ENCODE measurements at regions of chr10 and their contacts with region 1.

Region 1: GRCh38 chr10:28532383-28533175 is at the start of gene WAC:
- DNase-seq: peak; percentile 94 to 99 (median 97)
- ATAC-seq: peak; percentile 79
- H3K4me3 ChIP-seq: peak within 1 kb of the TSS; percentile 74 to 99
- H3K4me3 Mint-ChIP-seq: peak within 1 kb of the TSS; percentile 99
- H3K27ac ChIP-seq: peak within 1 kb of the TSS; percentile 95 to 99
- H3K27ac Mint-ChIP-seq: peak within 1 kb of the TSS; percentile 100
- H3K4me1 ChIP-seq: peaks cover 47% of the 10 kb centered on the region
- H3K4me1 Mint-ChIP-seq: peaks cover 69% of the 10 kb centered on the region
- H3K27me3 ChIP-seq: no peaks in the 10 kb centered on the region
- H3K27me3 Mint-ChIP-seq: no peaks in the 10 kb centered on the region
- CTCF ChIP-seq: no peak
- total RNA-seq, gene WAC: 195 to 200 TPM

Region 2: GRCh38 chr10:27099916-27100812 is 1432.4 kb before region 1 on chr10 and contains the start of gene ANKRD26:
- CTCF ChIA-PET with region 1: no interaction called
- POLR2A ChIA-PET with region 1: no interaction called
- intact Hi-C with region 1: loop called in 1 of 2 experiments (anchors 2 kb)
- DNase-seq: peak; percentile 88 to 99 (median 97)
- ATAC-seq: peak; percentile 53
- H3K4me3 ChIP-seq: peak within 1 kb of the TSS; percentile 84
- H3K4me3 Mint-ChIP-seq: peak within 1 kb of the TSS; percentile 93
- H3K27ac ChIP-seq: peak within 1 kb of the TSS; percentile 70 to 94
- H3K27ac Mint-ChIP-seq: peak within 1 kb of the TSS; percentile 95
- H3K4me1 ChIP-seq: peaks cover 35% of the 10 kb centered on the region
- H3K4me1 Mint-ChIP-seq: peaks cover 51% of the 10 kb centered on the region
- H3K27me3 ChIP-seq: no peaks in the 10 kb centered on the region
- H3K27me3 Mint-ChIP-seq: no peaks in the 10 kb centered on the region
- CTCF ChIP-seq: no peak
- total RNA-seq, gene ANKRD26: 4.0 to 4.7 TPM

Region 3: GRCh38 chr10:27742195-27743011 is 790.2 kb before region 1 on chr10:
- CTCF ChIA-PET with region 1: no interaction called
- POLR2A ChIA-PET with region 1: no interaction called
- intact Hi-C with region 1: loop called (anchors 2 to 10 kb)
- DNase-seq: peak; percentile 55 to 85 (median 78)
- ATAC-seq: peak; percentile 82
- H3K4me3 ChIP-seq: peak overlapping the region; percentile 42 to 80
- H3K4me3 Mint-ChIP-seq: peak overlapping the region; percentile 87
- H3K27ac ChIP-seq: no peak overlapping the region
- H3K27ac Mint-ChIP-seq: no peak overlapping the region
- H3K4me1 ChIP-seq: peaks cover 57% of the 10 kb centered on the region
- H3K4me1 Mint-ChIP-seq: peaks cover 43% of the 10 kb centered on the region
- H3K27me3 ChIP-seq: peaks cover 53 to 65% of the 10 kb centered on the region in 2 experiments
- H3K27me3 Mint-ChIP-seq: peaks cover 57% of the 10 kb centered on the region
- CTCF ChIP-seq: peak; percentile 78

Region 4: GRCh38 chr10:28432210-28432676 is 100.3 kb before region 1 on chr10:
- CTCF ChIA-PET with region 1: no interaction called
- POLR2A ChIA-PET with region 1: no interaction called
- intact Hi-C with region 1: loop called (anchors 2 to 5 kb)
- DNase-seq: peak in 7 of 9 experiments; percentile 1 to 64 (median 18)
- ATAC-seq: peak; percentile 51
- H3K4me3 ChIP-seq: peak overlapping the region; percentile 17 to 46
- H3K4me3 Mint-ChIP-seq: peak overlapping the region; percentile 68
- H3K27ac ChIP-seq: no peak overlapping the region
- H3K27ac Mint-ChIP-seq: no peak overlapping the region
- H3K4me1 ChIP-seq: no peaks in the 10 kb centered on the region
- H3K4me1 Mint-ChIP-seq: peaks cover 8% of the 10 kb centered on the region
- H3K27me3 ChIP-seq: peaks cover 0 to 1% of the 10 kb centered on the region in 2 experiments
- H3K27me3 Mint-ChIP-seq: peaks cover 11% of the 10 kb centered on the region
- CTCF ChIP-seq: peak; percentile 86

Region 5: DNA sequence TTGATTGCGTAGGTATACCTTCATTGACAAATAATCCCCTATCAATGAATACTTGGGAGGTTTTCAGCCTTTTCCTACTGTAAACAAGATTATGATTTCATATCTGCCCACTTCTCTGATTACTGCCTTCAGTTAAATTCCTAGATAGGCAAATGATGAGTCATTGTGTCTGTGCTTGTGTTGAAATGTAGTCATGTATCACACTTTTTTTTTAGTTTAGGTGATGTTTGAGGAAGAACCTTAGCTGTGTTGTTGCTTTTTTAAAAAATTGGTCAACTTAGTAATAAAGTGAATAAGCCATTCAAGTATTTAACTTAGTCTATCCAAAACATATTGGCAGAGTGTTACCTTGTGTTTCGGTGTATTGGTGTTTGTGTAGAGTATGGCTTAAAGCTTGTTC is 60.4 kb after region 1 on chr10:
- CTCF ChIA-PET with region 1: no interaction called
- POLR2A ChIA-PET with region 1: no interaction called
- intact Hi-C with region 1: loop called (anchors 5 kb)
- DNase-seq: no peak
- ATAC-seq: no peak
- H3K4me3 ChIP-seq: no peak overlapping the region
- H3K4me3 Mint-ChIP-seq: no peak overlapping the region
- H3K27ac ChIP-seq: no peak overlapping the region
- H3K27ac Mint-ChIP-seq: peak overlapping the region; percentile 6
- H3K4me1 ChIP-seq: peaks cover 23% of the 10 kb centered on the region
- H3K4me1 Mint-ChIP-seq: peaks cover 58% of the 10 kb centered on the region
- H3K27me3 ChIP-seq: no peaks in the 10 kb centered on the region
- H3K27me3 Mint-ChIP-seq: no peaks in the 10 kb centered on the region
- CTCF ChIP-seq: no peak

Region 6: DNA sequence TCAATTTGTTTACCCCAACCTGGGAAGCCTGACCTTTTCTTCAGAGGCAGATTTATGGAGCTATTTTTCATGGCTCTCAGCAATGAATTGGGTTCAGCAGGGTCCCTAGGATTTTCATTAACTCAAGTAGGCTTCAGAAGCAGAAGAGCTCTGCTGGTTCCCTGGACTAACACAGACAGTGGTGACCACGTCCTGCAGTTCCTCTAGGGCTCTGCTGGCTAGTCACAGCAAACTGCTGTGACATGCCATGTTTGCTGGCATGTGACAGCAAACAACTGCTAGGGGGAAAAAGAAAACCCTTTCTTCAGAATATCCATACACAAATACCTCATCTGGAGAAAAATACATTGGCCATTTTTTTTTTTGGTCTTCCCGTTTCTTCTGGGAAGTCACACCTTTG is 158.0 kb after region 1 on chr10:
- CTCF ChIA-PET with region 1: no interaction called
- POLR2A ChIA-PET with region 1: no interaction called
- intact Hi-C with region 1: no loop called
- DNase-seq: no peak
- ATAC-seq: no peak
- H3K4me3 ChIP-seq: no peak overlapping the region
- H3K4me3 Mint-ChIP-seq: no peak overlapping the region
- H3K27ac ChIP-seq: no peak overlapping the region
- H3K27ac Mint-ChIP-seq: no peak overlapping the region
- H3K4me1 ChIP-seq: no peaks in the 10 kb centered on the region
- H3K4me1 Mint-ChIP-seq: no peaks in the 10 kb centered on the region
- H3K27me3 ChIP-seq: peaks cover 0 to 5% of the 10 kb centered on the region in 2 experiments
- H3K27me3 Mint-ChIP-seq: peaks cover 27% of the 10 kb centered on the region
- CTCF ChIP-seq: no peak